ENCODE measurements at regions of chr14 and their contacts with region 1.

Region 1: GRCh38 chr14:73176685-73177084 is 40.4 kb downstream of the PSEN1 start:
- DNase-seq: no peak
- H3K4me3 ChIP-seq: no peak overlapping the region
- CTCF ChIP-seq: no peak
- POLR2A ChIP-seq: no peak

Region 2: GRCh38 chr14:72594099-72594901 is 582.4 kb before region 1 on chr14:
- intact Hi-C with region 1: loop called (anchors 5 kb)
- DNase-seq: peak in 1 of 2 donors; percentile 42
- H3K4me3 ChIP-seq: no peak overlapping the region
- CTCF ChIP-seq: no peak
- POLR2A ChIP-seq: no peak

Region 3: DNA sequence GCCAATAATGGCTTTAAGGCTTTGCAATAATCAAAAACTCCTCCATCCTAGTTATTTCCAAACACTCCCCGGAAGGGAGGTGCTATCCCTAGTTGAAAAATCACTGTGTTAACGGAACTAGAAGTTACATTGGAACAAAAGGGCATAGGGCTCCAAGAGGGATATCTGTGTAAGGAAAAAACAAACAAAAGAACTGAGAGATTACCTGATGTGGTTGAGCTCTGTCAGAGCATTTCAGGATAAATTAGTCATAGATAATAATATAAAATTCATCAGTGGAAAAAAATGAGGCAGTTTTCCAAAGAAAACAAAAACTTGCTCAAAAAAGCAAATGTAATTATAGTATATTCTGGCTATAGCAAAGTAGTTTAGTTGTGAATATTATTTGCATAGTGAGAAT is 33.3 kb after region 1 on chr14:
- intact Hi-C with region 1: no loop called
- DNase-seq: no peak
- H3K4me3 ChIP-seq: no peak overlapping the region
- CTCF ChIP-seq: no peak
- POLR2A ChIP-seq: no peak

Region 4: DNA sequence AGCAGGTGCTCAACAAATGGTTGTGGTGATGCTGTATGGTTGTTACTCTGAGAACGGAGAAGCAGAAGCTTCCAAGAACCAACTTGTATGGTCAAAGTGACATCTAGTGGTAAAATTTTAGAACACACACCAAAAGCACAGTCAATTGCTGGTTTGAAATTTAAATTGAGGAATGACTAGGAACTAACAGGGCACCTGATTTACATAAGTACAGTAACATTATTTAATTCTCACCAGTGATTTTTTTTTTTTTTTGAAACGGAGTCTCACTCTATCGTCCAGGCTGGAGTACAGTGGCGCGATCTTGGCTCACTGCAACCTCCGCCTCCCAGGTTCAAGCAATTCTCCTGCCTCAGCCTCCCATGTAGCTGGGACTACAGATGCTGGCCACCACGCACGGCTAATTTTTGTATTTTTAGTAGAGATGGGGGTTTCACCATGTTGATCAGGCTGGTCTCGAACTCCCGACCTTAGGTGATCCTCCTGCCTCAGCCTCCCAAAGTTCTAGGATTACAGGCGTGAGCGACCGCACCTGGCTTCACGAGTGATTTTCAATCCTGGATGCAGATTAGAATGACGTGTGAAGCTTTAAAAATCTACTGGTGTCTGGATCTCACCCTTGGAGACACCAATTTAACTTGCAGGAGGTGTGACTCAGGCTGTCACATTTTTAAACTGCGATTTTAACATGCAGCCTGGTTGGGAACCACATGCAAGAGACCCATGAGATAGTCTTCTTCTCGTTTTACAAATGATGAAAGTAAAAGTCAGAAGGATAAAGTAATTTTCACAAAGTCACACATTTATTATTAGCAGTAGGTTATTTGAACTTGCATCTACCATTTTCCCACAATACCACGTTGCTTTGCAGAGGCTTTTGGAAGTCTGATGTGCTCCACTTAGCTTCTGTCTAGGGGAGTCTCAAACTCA is 295.8 kb after region 1 on chr14:
- intact Hi-C with region 1: loop called (anchors 5 kb)
- DNase-seq: peak in 1 of 2 donors; percentile 66
- H3K4me3 ChIP-seq: no peak overlapping the region
- CTCF ChIP-seq: peak in 1 of 3 donors; percentile 40
- POLR2A ChIP-seq: no peak

Region 5: DNA sequence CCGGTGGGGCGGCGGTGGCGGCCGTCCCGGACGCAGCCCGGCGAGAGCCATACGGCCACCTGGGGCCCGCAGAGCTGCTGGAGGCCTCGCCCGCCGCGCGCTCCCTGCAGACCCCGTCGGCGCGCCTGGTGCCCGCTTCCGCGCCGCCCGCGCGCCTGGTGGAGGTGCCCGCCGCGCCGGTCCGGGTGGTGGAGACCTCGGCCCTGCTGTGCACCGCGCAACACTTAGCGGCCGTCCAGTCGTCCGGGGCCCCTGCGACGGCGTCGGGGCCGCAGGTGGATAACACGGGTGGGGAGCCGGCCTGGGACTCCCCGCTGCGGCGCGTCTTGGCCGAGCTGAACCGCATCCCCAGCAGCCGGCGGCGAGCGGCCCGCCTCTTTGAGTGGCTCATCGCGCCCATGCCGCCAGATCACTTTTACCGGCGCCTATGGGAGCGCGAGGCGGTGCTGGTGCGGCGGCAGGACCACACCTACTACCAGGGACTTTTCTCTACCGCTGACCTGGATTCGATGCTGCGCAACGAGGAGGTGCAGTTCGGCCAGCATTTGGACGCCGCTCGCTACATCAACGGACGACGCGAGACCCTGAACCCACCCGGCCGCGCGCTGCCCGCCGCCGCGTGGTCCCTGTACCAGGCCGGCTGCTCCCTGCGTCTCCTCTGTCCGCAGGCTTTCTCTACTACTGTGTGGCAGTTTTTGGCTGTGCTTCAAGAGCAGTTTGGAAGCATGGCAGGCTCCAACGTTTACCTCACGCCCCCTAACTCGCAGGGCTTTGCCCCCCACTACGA is 314.8 kb after region 1 on chr14:
- intact Hi-C with region 1: no loop called
- DNase-seq: peak; percentile 34 to 91
- H3K4me3 ChIP-seq: peak overlapping the region; percentile 50
- CTCF ChIP-seq: no peak
- POLR2A ChIP-seq: no peak

Region 6: DNA sequence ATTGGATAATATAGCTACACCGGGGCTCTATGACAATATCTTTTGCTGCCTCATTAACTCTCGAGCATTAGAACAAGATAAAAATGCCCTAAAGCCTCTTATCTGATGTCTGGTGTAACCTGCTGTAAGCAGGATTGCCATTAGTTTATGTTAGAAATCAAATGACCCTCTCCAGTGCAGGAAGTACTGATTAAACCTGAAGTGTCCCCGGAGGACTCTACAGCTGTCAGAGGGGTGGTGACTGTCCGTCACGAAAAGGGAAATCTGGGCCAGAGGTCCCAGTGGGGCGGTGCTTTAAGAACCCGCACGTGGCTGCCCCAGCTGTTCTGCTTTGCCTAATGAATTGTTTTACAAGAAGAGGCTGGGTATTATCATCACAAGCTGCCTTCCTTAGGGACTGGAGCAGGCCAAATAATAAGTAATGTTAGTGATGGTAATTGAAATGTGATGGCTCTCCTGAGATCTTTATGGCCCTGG is 963.7 kb after region 1 on chr14:
- intact Hi-C with region 1: no loop called
- DNase-seq: peak; percentile 61 to 92
- H3K4me3 ChIP-seq: no peak overlapping the region
- CTCF ChIP-seq: no peak
- POLR2A ChIP-seq: no peak